ENCODE measurements at regions of chr20 and their contacts with region 1.

Region 1: GRCh38 chr20:56801744-56802670 is 172.9 kb downstream of the TFAP2C start:
- DNase-seq: no peak
- H3K4me3 ChIP-seq: peak overlapping the region in 2 of 3 donors; percentile 25 to 39
- H3K27ac ChIP-seq: peak overlapping the region; percentile 70 to 72
- H3K4me1 ChIP-seq: peaks cover 0 to 11% of the 10 kb centered on the region in 2 donors
- H3K27me3 ChIP-seq: no peaks in the 10 kb centered on the region
- CTCF ChIP-seq: no peak
- POLR2A ChIP-seq: no peak

Region 2: DNA sequence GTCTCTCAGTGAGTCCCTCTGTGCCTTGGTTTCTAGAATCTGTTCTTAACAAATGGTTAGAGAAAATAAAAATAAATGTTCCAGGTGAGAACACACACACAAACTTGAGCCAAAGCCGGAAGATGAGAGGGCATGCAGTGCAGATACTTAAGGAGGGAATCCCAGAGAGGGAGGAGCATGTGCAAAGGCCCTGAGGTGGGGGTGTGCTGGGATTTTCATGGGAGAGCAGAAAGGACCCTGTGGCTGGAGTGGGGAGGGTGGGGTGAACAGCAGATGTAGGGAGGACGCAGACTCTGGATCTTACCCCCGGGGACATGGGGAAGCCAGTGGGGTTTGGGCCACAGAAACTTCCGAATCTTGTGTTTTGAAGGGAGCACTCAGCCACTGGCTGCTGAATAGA is 155.4 kb before region 1 on chr20:
- intact Hi-C with region 1: loop called (anchors 10 kb)
- DNase-seq: no peak
- H3K4me3 ChIP-seq: no peak overlapping the region
- H3K27ac ChIP-seq: no peak overlapping the region
- H3K4me1 ChIP-seq: no peaks in the 10 kb centered on the region
- H3K27me3 ChIP-seq: no peaks in the 10 kb centered on the region
- CTCF ChIP-seq: no peak
- POLR2A ChIP-seq: no peak

Measured in breast epithelium (tissue), 4 donors.